Cardiac septum (tissue), 1 donor: ENCODE measurements at regions of chr10 and their contacts with region 1.

Region 1: GRCh38 chr10:48656241-48656913 is 28.3 kb upstream of the WDFY4 start:
- DNase-seq: peak; percentile 97

Region 2: DNA sequence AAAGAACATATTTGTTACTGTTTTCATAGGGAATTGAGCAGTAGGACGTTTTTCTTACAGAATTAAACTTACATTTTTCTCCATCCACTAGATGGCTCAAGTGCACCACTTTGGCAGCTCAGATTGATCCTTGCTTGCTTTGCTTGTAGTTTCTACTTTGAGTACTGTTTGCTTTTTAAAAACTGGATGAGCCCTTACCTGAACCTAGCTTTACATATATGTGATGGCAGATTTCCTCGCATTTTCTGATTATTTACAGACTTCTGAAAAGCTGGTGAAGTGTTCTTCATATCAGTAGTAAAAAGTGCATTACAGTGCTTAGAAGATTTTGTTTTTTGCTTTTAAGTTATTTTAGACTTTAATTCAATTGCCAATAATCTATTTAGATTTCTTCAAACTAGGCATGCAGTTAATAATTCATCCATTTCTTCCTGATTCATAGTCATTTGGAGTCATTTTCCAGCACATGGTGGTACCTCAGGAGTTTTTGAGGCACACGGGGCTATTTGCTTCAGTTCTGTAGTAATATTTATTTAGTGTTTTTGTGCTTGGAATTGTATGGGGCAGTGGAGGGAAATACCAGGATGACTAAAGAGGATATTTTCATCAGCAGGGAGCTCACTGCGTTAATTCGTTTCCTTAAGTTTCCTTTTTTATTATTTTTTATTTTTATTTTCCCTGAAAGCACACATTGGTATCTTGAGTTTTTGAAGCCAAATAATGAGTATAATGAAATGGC is 292.6 kb before region 1 on chr10:
- intact Hi-C with region 1: loop called (anchors 2 kb)
- DNase-seq: no peak

Region 3: DNA sequence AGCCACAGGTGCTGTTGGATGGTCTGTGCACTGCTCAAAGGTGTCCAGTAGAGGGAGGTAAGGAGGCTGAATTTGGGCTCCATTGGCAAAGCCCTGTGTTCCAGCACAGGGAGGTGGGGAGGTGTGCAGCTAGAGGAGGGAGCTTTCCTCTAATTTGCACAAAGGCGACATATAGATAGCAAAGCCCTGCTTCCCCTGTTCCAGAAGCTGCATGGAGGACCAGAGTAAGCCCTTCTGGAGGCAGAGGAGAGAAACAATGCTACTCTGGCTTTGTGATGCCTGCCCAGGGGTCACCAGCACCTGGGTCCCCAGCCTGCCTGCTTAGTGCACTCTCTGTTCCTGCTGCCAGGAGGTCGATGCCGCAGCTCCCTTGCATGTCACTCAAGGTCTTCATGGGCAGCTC is 48.1 kb before region 1 on chr10:
- intact Hi-C with region 1: loop called (anchors 5 kb)
- DNase-seq: peak; percentile 75

Region 4: DNA sequence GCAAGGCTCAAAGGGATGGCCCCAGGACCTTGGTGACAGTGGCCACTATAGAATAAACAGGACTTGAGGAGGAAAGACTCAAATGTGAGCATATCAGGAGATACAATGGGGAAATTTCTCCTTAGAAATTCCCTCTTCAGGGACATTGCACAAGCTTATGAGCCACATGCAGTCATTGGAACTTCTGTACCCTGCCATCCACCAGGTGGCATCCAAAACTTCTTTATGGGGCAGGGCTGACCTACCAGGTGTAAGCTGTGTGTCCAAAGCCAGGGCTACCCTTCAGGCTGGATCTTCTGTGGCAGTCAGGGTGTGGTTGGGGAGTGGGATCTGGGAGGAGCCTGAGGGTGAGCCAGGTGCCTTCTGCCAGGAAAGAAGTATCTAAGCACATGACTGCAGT is 319.8 kb after region 1 on chr10:
- intact Hi-C with region 1: loop called (anchors 5 kb)
- DNase-seq: no peak

Region 5: GRCh38 chr10:49518982-49519578 is 862.7 kb after region 1 on chr10:
- intact Hi-C with region 1: loop called (anchors 5 kb)
- DNase-seq: no peak